GM12878 (cell line): ENCODE measurements at regions of chr17 and their contacts with region 1.

Region 1: DNA sequence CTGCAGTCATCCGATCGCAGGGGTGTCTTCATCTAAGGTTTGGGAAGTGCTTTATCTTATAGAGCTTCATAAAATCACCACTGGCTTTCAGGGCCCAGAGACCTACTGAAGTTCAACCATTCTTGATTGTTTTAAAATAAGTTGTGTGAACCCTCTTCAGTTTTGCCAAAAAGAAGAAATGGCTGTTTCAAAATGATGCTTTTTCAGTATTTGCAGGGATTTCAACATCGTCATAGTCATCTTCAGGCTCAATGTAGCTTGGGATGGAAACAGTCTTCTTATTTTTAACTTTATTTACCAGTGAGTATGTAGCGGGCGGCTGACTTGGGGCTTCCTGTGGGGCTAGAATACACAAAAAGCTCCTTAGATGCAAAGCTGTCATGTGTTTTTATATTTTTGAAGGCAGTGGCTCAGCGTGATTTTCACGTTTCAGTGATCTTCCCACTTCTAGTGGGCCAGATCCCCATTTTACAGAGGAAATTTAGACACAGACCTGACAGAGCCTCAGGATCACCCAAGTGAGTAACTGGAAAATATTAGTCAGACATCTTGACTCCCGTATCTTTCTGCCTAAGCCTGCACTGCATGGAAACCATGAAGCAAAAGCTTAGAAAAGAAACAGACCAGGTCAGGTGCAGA is 19.1 kb upstream of the ZNF594 start:
- DNase-seq: peak; percentile 73
- ATAC-seq: peak; percentile 70
- H3K4me3 ChIP-seq: no peak overlapping the region
- H3K27ac ChIP-seq: peak overlapping the region; percentile 88
- H3K4me1 ChIP-seq: peaks cover 53% of the 10 kb centered on the region
- H3K27me3 ChIP-seq: no peaks in the 10 kb centered on the region
- CTCF ChIP-seq: no peak
- EP300 ChIP-seq: peak in 1 of 2 experiments; percentile 63; a peak in 2 of 4 replicates
- POLR2A ChIP-seq: no peak
- RAD21 ChIP-seq: no peak

Region 2: DNA sequence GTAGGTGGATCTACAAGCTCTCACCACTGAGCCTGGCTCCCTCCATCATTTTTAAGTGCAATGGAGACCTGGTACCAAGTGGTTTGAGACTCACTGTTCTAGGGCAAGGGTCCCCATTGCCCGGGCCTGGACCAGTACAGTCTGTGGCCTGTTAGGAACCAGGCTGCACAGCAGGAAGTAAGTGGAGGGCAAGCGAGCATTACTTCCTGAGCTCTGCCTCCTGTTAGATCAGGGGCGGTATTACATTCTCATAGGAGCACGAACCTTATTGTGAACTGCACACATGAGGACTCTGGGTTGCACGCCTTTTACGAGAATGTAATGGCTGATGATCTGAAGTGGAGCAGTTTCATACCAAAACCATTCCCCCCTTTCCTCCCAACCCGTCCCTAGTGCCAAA is 12.3 kb before region 1 on chr17:
- CTCF ChIA-PET with region 1: interaction called, 11 read pairs
- POLR2A ChIA-PET with region 1: interaction called, 5 read pairs
- RAD21 ChIA-PET with region 1: interaction called, 12 read pairs
- SMC1A ChIA-PET with region 1: interaction called, 41 read pairs
- in situ Hi-C with region 1: no loop called
- intact Hi-C with region 1: no loop called
- DNase-seq: no peak
- ATAC-seq: peak; percentile 69
- H3K4me3 ChIP-seq: no peak overlapping the region
- H3K27ac ChIP-seq: peak overlapping the region; percentile 89
- H3K4me1 ChIP-seq: peaks cover 31% of the 10 kb centered on the region
- H3K27me3 ChIP-seq: no peaks in the 10 kb centered on the region
- CTCF ChIP-seq: no peak; a peak in 1 of 6 replicates
- EP300 ChIP-seq: no peak
- POLR2A ChIP-seq: peak; percentile 27; the same call in 1 of the 2 replicates
- RAD21 ChIP-seq: no peak